CD8-positive, alpha-beta memory T cell (primary cell): ENCODE measurements at regions of chr17 and their contacts with region 1.

Region 1: GRCh38 chr17:17280613-17281549 is at the start of gene COPS3:
- DNase-seq: peak; percentile 96 to 99 (median 96)
- H3K4me3 ChIP-seq: peak within 1 kb of the TSS; percentile 77
- H3K4me3 Mint-ChIP-seq: peak within 1 kb of the TSS; percentile 88 to 99 (median 92)
- H3K27ac ChIP-seq: peak within 1 kb of the TSS; percentile 89
- H3K27ac Mint-ChIP-seq: peak within 1 kb of the TSS; percentile 95 to 99 (median 98)
- H3K4me1 ChIP-seq: peaks cover 33% of the 10 kb centered on the region
- H3K4me1 Mint-ChIP-seq: peaks cover 33 to 52% (median 37%) of the 10 kb centered on the region in 3 donors
- H3K27me3 ChIP-seq: no peaks in the 10 kb centered on the region
- H3K27me3 Mint-ChIP-seq: no peaks in the 10 kb centered on the region
- total RNA-seq, gene COPS3: 132 to 137 TPM

Region 2: GRCh38 chr17:17305281-17305801 is 24.5 kb after region 1 on chr17:
- CTCF ChIA-PET with region 1: interaction called, 4 read pairs
- POLR2A ChIA-PET with region 1: interaction called, 10 read pairs
- DNase-seq: peak; percentile 37 to 74 (median 46)
- H3K4me3 ChIP-seq: peak overlapping the region; percentile 22
- H3K4me3 Mint-ChIP-seq: peak overlapping the region; percentile 45 to 92 (median 83)
- H3K27ac ChIP-seq: peak overlapping the region; percentile 22
- H3K27ac Mint-ChIP-seq: peak overlapping the region; percentile 81 to 97 (median 93)
- H3K4me1 ChIP-seq: peaks cover 30% of the 10 kb centered on the region
- H3K4me1 Mint-ChIP-seq: peaks cover 27 to 33% (median 31%) of the 10 kb centered on the region in 3 donors
- H3K27me3 ChIP-seq: no peaks in the 10 kb centered on the region
- H3K27me3 Mint-ChIP-seq: peaks cover 0 to 1% of the 10 kb centered on the region in 2 donors